ENCODE measurements at regions of chr1 and their contacts with region 1.

Region 1: DNA sequence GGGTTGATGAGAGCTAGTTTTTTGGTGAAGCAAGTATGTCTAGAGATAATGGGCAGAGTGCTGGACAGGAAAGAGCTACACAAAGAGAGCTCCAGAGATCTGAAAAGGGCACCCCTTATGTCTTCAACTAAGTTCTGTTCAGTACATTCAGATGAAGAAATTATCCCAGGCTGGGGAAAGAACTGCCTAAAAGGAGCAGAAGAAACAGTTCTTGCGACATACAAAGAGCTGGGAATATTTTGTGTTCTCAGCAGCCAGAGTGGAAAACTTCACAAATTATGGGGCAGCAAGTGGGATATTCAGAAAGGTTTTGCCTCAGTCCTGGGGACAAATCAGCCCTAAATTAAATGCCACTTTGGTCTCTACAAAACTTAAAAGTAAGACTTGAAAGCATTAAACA is 17.4 kb upstream of the CCN1 start:
- DNase-seq: no peak
- ATAC-seq: no peak
- H3K4me3 ChIP-seq: no peak overlapping the region
- H3K4me1 ChIP-seq: no peaks in the 10 kb centered on the region
- CTCF ChIP-seq: no peak

Region 2: DNA sequence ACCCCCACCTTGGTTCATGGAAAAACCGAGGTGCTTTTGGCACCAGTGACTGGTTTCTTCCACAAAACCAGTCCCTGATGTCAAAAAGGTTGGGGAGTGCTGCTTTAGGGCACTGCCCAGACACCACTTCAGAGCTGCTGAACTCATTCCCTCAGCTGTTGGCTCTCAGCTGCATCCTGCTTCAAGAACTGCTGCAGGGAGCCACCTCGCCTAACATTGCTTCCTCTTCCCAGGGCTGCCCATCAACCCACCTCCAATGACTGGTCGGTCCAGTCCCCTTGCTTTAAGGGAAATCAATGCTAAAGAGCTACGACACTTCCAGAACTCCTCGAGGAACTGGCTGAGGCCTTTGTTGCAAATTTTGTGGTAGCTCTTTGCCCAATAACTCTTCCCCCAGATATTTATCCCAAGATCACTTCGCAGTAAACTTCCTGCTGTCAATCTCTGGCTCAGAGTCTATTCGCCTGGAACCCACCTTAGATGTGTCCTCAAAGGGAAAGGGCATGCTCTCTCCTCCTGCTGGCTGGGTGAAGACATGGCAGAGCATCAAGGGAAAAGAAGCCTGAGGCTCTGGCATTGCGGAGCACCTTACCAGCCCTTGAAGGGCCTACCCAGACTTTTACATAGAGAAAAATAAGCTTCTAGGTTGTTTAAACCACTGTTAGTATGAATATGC is 332.7 kb before region 1 on chr1:
- intact Hi-C with region 1: no loop called
- DNase-seq: no peak
- ATAC-seq: peak; percentile 38
- H3K4me3 ChIP-seq: no peak overlapping the region
- H3K4me1 ChIP-seq: no peaks in the 10 kb centered on the region
- CTCF ChIP-seq: no peak

Region 3: DNA sequence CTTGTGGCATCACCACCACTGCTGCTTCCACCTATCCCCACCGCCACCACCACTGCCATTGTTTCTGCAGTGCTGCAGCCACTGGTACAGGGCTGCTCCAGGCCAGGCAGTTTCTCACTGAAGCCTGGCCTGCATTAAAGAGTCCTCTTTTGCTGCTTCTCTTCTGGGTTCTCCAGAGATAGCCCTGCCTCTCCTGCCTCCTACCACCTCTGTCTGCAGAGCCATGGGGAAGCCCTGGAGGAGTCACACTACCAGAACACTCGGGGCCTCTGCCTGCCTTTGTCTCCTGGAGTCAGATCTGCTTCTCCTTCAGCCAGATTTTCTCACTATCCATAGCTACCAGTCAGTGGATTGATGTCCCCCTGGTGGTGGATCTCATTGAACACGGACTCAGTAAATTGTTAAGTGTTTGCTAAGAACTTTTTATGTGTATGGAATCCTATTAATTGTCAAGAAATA is 60.5 kb before region 1 on chr1:
- intact Hi-C with region 1: loop called in 1 of 2 experiments (anchors 5 kb)
- DNase-seq: peak in 2 of 3 donors; percentile 24 to 87
- ATAC-seq: peak; percentile 85
- H3K4me3 ChIP-seq: no peak overlapping the region
- H3K4me1 ChIP-seq: no peaks in the 10 kb centered on the region
- CTCF ChIP-seq: peak; percentile 12

Region 4: GRCh38 chr1:85661767-85662166 is 98.6 kb after region 1 on chr1:
- intact Hi-C with region 1: no loop called
- DNase-seq: no peak
- ATAC-seq: no peak
- H3K4me3 ChIP-seq: no peak overlapping the region
- H3K4me1 ChIP-seq: peaks cover 5% of the 10 kb centered on the region
- CTCF ChIP-seq: no peak